Activated CD8-positive, alpha-beta T cell treated with anti-CD3 and anti-CD28 coated beads, Interleukin-2, amount 10 ng/mL, durations not matched to agents 7 days and 5 days (primary cell): ENCODE measurements at regions of chr3 and their contacts with region 1.

Region 1: GRCh38 chr3:12810013-12810780 is 13.7 kb downstream of the CAND2 start:
- DNase-seq: peak; percentile 95
- ATAC-seq: peak; percentile 99
- H3K4me3 Mint-ChIP-seq: peak overlapping the region; percentile 64
- H3K27ac Mint-ChIP-seq: peak overlapping the region; percentile 80
- H3K4me1 Mint-ChIP-seq: peaks cover 6% of the 10 kb centered on the region
- H3K27me3 Mint-ChIP-seq: peaks cover 11% of the 10 kb centered on the region

Region 2: GRCh38 chr3:12774630-12775029 is 35.6 kb before region 1 on chr3:
- CTCF ChIA-PET with region 1: interaction called, 10 read pairs
- POLR2A ChIA-PET with region 1: no interaction called
- DNase-seq: no peak
- ATAC-seq: no peak
- H3K4me3 Mint-ChIP-seq: no peak overlapping the region
- H3K27ac Mint-ChIP-seq: no peak overlapping the region
- H3K4me1 Mint-ChIP-seq: peaks cover 9% of the 10 kb centered on the region
- H3K27me3 Mint-ChIP-seq: peaks cover 8% of the 10 kb centered on the region

Region 3: DNA sequence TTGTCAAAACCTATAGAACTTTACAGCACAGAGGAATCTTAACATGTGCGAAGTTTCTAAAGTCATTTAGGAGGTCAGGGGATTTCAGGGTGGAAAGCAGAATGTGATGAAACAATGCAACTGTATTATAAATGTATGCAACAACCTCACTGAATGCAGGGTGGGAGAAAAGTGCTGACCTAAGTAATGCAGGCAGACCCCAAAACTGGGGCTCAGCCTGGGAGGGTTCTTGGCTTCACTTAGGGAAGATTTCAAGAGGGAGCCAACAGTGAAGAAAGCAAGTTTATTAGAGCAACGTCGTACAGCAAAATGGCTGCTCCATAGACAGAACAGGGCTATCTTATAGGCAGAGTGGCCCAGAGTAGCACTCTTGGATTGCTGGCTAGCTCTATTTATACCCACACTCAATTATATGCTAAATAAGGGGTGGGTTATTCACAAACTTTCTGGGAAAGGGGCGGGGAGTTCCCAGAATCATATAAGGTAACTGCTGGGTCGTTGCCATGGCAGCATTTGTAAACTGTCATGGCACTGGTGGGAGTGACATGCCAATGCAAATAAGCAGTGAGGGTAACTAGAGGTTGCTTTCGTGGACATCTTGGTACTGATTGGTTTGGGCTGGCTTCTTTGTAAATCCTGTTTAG is 27.9 kb before region 1 on chr3:
- CTCF ChIA-PET with region 1: interaction called, 34 read pairs
- POLR2A ChIA-PET with region 1: no interaction called
- DNase-seq: no peak
- ATAC-seq: no peak
- H3K4me3 Mint-ChIP-seq: no peak overlapping the region
- H3K27ac Mint-ChIP-seq: no peak overlapping the region
- H3K4me1 Mint-ChIP-seq: no peaks in the 10 kb centered on the region
- H3K27me3 Mint-ChIP-seq: peaks cover 30% of the 10 kb centered on the region

Region 4: DNA sequence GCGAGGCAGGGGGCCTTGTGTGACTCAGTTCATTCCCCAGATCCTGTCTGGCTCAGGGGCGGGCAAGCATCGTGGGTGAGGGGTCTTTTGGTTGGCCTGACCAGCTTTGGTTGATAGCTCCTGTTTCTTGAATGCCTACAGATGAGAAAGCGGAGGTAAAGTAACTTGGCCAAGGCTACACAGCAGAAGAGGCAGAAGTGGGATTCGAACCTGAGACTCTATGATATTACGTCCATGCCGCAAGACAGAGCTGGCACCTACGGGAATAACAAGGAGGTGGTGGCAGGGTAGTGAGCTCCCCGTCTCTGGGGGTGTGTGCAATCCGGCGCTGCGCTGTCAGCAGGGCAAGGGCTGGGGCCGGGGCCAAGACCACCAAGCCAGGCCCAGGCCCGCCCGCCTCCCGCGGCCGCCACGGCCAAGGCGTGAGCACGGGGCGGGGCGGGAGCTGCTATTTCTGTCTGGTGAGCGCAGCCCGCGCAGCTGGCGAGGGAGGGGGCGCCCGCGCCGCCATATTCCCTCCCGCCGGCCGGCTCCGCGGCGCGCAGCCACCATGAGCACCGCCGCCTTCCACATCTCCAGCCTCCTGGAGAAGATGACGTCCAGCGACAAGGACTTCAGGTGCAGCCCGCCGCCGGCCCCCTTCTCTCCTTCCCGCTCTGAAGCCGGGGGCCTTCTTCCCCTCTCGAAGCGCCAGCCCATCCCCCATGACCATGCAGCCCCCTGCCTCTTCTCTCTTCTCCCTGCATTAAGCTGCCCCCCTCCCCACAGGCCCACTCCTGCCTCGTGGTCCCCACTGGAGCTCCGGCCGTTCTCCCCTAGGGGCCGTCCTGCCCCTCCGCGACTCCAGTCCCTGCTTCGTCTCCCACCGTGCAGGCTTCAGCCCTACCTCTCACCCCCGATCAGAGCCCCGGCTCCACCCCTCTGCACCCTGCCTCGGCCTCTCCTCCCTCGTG is 13.8 kb before region 1 on chr3 and contains the start of gene CAND2:
- CTCF ChIA-PET with region 1: interaction called, 26 read pairs
- POLR2A ChIA-PET with region 1: no interaction called
- DNase-seq: no peak
- ATAC-seq: peak; percentile 76
- H3K4me3 Mint-ChIP-seq: peak within 1 kb of the TSS; percentile 61
- H3K27ac Mint-ChIP-seq: no peak within 1 kb of the TSS
- H3K4me1 Mint-ChIP-seq: peaks cover 6% of the 10 kb centered on the region
- H3K27me3 Mint-ChIP-seq: peaks cover 17% of the 10 kb centered on the region
- total RNA-seq, gene CAND2: 0.31 to 0.53 TPM

Region 5: GRCh38 chr3:12822725-12823373 is 12.7 kb after region 1 on chr3:
- CTCF ChIA-PET with region 1: interaction called, 15 read pairs
- POLR2A ChIA-PET with region 1: no interaction called
- DNase-seq: no peak
- ATAC-seq: no peak
- H3K4me3 Mint-ChIP-seq: no peak overlapping the region
- H3K27ac Mint-ChIP-seq: no peak overlapping the region
- H3K4me1 Mint-ChIP-seq: no peaks in the 10 kb centered on the region
- H3K27me3 Mint-ChIP-seq: no peaks in the 10 kb centered on the region

Region 6: GRCh38 chr3:12841149-12841970 is 31.2 kb after region 1 on chr3 and contains the start of gene RPL32:
- CTCF ChIA-PET with region 1: interaction called, 22 read pairs
- POLR2A ChIA-PET with region 1: interaction called, 6 read pairs
- DNase-seq: peak; percentile 91
- ATAC-seq: peak; percentile 91
- H3K4me3 Mint-ChIP-seq: peak within 1 kb of the TSS; percentile 96
- H3K27ac Mint-ChIP-seq: peak within 1 kb of the TSS; percentile 99
- H3K4me1 Mint-ChIP-seq: peaks cover 48% of the 10 kb centered on the region
- H3K27me3 Mint-ChIP-seq: peaks cover 2% of the 10 kb centered on the region
- total RNA-seq, gene RPL32: 1,764 to 1,890 TPM

Region 7: DNA sequence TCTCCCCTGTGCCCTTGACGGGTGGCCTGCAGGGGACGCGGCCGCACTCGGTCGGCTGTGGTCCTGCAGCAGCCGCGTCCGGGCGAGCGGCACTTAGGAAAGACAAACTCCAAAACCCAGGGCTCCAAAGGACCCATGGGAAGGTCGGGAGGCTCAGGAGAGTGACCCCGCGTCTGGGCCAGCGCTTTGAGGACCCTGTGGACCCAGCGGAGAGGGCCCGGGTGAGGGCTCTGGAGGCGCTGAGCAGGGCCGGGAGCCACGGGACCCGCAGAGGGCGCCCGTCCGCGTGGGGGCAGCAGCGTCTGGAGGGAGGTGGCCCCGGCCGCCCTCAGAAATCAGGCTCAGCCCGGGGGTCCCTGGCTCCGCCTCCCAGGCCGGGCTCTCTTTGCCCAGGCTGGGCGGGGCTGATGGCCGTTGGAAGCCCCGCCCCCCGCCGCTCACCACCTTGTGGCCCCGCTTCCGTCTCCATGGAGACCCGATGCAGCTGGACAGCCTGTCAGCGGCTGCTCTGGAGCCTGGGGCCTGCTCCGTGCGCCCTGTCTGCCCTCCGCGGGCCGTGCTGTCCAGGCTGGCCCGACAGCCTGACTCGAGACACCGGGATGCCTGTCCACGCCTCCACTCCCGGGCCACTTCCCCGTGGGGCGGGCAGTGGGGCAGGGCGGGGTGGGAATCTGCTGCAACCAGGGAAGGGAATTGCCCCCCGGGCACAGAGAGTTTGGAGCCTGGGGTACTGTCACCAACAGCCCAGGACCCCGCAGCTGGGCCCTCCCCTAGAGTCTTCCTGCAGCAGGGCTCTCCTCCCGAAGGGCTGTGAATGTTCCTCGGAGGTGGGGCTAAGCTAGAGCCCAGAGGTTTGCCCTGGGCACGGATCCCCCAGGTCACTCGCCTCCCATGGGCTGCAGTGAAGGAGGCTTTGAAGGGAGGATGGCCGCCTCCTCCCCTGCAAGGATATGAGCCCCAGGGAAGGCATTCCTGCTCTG is 66.0 kb after region 1 on chr3:
- CTCF ChIA-PET with region 1: no interaction called
- POLR2A ChIA-PET with region 1: no interaction called
- DNase-seq: peak; percentile 35
- ATAC-seq: peak; percentile 66
- H3K4me3 Mint-ChIP-seq: no peak overlapping the region
- H3K27ac Mint-ChIP-seq: no peak overlapping the region
- H3K4me1 Mint-ChIP-seq: no peaks in the 10 kb centered on the region
- H3K27me3 Mint-ChIP-seq: peaks cover 21% of the 10 kb centered on the region

Region 8: DNA sequence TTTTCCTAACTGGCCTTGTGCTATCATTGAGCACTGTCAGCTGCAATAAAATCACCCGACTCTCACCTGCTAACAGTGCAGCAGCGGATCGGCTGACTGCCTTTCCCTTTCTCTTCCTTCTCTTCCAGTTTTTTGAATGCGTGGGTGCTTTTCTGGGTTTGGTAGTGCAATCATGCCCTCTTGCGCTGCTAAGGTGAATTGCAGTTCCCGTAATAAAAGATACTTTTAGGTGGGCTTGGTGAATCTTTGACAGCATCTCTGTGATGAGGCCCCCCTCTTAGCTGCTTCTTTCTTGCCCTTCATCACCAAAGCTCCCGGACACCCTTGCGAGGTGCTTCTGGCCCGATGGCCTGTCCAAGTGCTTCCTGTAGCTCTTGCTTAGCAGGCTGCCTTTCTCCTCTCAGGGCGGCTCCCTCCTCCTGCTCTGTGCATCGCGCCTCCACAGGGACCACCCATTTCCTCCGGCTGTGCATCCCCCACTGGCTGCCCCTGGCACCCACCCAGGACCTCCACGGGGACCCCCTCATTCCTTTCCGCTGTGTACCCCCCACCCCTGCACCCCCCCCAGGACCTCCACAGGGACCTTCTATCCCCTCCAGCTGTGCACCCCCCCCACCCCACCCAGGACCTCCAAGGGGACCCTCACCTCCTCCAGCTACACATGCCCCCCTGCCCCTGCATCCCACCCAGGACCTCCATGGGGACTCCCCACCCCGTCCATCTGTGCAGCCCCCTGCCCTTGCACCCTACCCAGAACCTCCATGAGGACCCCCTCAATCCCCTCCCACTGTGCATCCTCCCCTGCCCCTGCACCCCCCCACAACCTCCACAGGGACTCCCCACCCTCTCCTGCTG is 82.0 kb after region 1 on chr3:
- CTCF ChIA-PET with region 1: interaction called, 13 read pairs
- POLR2A ChIA-PET with region 1: no interaction called
- DNase-seq: peak; percentile 57
- ATAC-seq: peak; percentile 37
- H3K4me3 Mint-ChIP-seq: no peak overlapping the region
- H3K27ac Mint-ChIP-seq: no peak overlapping the region
- H3K4me1 Mint-ChIP-seq: peaks cover 3% of the 10 kb centered on the region
- H3K27me3 Mint-ChIP-seq: peaks cover 27% of the 10 kb centered on the region

Region 9: DNA sequence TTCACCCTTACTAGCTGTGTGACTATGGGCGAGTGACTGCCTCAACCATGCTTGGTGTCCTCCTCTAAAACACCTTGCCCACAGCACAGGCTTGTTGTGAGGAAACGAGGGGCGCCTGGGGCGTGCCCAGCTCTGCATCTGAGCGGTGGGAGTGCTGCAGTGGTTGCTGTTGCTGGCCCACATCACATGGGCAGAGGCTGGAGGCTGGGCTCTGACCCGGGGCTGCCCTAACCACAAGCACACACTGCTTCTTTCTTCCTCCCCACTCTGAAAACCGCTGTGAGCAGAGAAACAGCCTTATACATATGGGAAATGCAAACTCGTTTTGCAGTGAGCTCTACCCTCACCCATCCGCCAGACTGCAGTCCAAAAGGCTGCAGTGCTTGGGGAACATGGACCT is 106.0 kb after region 1 on chr3:
- CTCF ChIA-PET with region 1: no interaction called
- POLR2A ChIA-PET with region 1: no interaction called
- DNase-seq: peak; percentile 85
- ATAC-seq: peak; percentile 86
- H3K4me3 Mint-ChIP-seq: peak overlapping the region; percentile 21
- H3K27ac Mint-ChIP-seq: peak overlapping the region; percentile 65
- H3K4me1 Mint-ChIP-seq: peaks cover 31% of the 10 kb centered on the region
- H3K27me3 Mint-ChIP-seq: no peaks in the 10 kb centered on the region